ENCODE measurements at regions of chr5 and their contacts with region 1.

Region 1: DNA sequence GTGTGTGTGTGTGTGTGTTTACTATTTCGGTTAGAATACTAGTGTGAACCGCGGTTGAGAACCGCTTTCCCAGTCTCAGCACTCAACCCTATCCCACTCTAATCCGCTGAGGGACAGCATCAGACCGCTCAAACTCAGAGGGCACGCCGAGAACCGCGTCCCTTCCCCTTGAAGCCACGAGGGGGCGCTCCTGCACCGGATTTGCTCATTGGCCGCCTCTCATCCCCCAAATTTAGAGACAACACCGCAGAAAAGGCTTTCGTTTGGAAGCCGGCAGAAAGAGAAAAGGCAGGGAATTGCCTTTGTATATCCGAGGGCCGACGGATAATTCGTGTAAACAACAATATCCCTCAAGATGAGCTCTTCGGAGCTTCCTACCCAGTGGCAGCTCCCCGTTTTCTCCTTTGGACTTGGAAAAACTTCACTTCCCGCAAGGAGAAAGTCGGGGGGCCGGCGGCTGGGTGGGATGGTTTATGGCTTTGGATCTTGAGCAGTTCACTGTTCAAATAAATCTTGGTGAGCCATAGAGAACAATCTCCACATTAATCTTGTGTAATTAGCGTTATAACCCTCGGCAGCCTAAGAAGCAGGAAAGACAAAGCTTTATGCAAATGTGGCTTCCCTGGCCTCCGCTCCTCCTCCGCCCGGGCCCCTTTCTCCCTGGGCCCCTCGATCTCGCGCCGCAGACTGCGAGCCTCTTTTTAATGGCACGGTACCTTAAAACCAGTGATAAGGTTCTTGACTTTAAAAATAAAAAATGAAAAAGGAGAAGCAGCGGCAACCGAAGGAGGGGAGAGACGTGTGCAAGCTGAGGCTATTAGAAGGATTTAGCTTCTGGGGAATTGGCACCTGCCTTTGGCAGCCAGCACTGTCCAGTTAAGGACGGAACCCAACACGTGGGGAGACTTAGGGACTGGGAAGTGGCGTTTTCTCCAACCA is 296.8 kb downstream of the PARP8 start:
- DNase-seq: peak; percentile 65
- H3K4me3 ChIP-seq: peak overlapping the region; percentile 79
- H3K27ac ChIP-seq: no peak overlapping the region
- H3K4me1 ChIP-seq: no peaks in the 10 kb centered on the region
- H3K27me3 ChIP-seq: peaks cover 41% of the 10 kb centered on the region

Region 2: DNA sequence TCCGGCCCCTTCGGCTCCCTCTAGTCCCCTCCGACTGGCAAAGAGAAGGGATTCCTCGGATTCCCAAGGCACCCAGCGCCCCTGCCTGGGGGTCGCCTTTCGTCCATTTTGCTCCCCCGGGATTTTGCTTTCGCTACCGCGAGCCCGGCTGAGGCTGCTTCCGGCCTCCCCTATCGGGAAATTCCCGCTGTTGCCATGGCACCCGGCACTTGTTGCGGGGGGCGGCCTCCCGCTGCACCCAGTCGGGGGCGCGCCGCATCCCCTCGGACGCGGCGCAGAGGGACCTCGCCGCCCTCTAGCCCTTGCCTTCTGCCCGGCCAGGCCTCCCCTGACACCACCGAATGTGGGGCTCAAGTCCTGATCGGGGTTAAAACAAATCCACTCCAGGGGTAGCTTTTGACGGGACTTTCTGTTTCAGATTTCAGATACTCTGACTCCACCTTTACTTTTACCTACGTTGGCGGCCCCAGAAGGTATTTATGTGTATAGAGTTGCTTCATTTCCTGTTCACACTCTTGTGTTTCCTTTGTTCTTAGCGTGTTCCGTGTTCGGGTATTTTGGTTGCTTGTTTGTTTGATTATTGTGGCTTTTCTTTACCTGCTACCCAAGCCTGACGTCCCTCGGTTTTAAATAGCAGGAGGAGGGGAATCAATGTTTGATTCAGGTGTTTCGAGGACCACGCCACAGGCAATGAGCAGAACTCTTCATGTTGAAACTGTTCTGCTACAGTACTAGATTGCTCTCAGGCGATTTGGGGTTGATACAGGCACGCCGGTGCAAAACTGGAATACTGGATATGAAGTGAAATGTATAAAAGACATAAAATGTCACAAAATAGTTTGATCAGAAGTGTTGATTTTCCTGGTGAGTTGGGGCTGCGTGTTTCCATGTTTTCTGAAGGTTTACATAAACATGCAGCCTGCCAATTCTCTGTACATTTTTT is 295.3 kb before region 1 on chr5:
- in situ Hi-C with region 1: no loop called
- DNase-seq: peak; percentile 71
- H3K4me3 ChIP-seq: peak overlapping the region; percentile 74
- H3K27ac ChIP-seq: no peak overlapping the region
- H3K4me1 ChIP-seq: 0 out of 2 replicates have a peak, but pooled peaks cover 4% of the 10 kb centered on the region
- H3K27me3 ChIP-seq: no peaks in the 10 kb centered on the region

Region 3: DNA sequence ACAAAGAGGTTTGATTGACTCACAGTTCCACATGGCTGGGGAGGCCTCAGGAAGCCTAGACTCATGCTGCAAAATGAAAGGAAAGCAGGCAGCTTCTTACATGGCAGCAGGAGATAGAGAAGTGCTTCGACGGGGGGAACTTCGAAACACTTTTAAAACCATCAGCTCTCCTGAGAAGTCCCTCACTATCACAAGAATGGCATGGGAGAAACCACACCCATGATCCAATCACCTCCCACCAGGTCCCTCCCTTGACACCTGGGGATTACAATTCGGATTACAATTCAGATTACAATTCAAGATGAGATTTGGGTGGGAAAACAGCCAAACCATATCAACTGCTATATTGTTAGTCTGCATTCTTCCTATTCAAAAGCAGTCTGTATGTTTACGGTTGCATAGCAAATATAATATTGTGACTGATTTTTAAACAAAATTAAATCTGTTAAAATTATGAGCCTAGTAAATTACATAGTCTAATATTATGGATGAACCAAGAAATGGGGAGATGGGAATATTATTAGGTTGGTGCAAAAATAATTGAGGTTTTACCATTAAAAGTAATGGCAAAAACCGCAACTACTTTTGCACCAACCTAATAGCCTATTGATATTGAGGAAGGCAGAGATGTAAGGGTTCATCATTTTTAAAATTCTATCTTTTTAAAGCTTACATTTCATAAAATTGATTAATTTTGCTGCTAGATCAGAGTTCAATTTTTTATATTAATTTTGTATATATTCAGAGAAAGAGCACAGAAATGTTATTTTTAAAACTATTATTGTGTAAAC is 97.9 kb after region 1 on chr5:
- in situ Hi-C with region 1: no loop called
- DNase-seq: no peak
- H3K4me3 ChIP-seq: no peak overlapping the region
- H3K27ac ChIP-seq: no peak overlapping the region
- H3K4me1 ChIP-seq: no peaks in the 10 kb centered on the region
- H3K27me3 ChIP-seq: no peaks in the 10 kb centered on the region

Region 4: GRCh38 chr5:52007230-52007858 is 1044.1 kb after region 1 on chr5:
- in situ Hi-C with region 1: loop called (anchors 10 kb)
- DNase-seq: peak; percentile 63
- H3K4me3 ChIP-seq: no peak overlapping the region
- H3K27ac ChIP-seq: no peak overlapping the region
- H3K4me1 ChIP-seq: no peaks in the 10 kb centered on the region
- H3K27me3 ChIP-seq: no peaks in the 10 kb centered on the region

Region 5: GRCh38 chr5:52657247-52657645 is 1694.0 kb after region 1 on chr5:
- in situ Hi-C with region 1: loop called (anchors 10 kb)
- DNase-seq: peak; percentile 71
- H3K4me3 ChIP-seq: peak overlapping the region; percentile 39; the same call in 1 of the 2 replicates
- H3K27ac ChIP-seq: no peak overlapping the region
- H3K4me1 ChIP-seq: no peaks in the 10 kb centered on the region
- H3K27me3 ChIP-seq: peaks cover 40% of the 10 kb centered on the region